Activated CD8-positive, alpha-beta T cell treated with anti-CD3 and anti-CD28 coated beads, Interleukin-2, amount 10 ng/mL, durations not matched to agents 7 days and 5 days (primary cell): ENCODE measurements at regions of chr22 and their contacts with region 1.

Region 1: GRCh38 chr22:31160328-31160978 is 471 bp downstream of the RNF185 start:
- DNase-seq: peak; percentile 23
- ATAC-seq: peak; percentile 57
- H3K4me3 Mint-ChIP-seq: peak overlapping the region; percentile 100
- H3K27ac Mint-ChIP-seq: peak overlapping the region; percentile 97
- H3K4me1 Mint-ChIP-seq: peaks cover 32% of the 10 kb centered on the region
- H3K27me3 Mint-ChIP-seq: peaks cover 5% of the 10 kb centered on the region

Region 2: GRCh38 chr22:31148953-31149627 is 11.4 kb before region 1 on chr22:
- CTCF ChIA-PET with region 1: interaction called, 10 read pairs
- POLR2A ChIA-PET with region 1: no interaction called
- DNase-seq: peak; percentile 45
- ATAC-seq: peak; percentile 68
- H3K4me3 Mint-ChIP-seq: no peak overlapping the region
- H3K27ac Mint-ChIP-seq: no peak overlapping the region
- H3K4me1 Mint-ChIP-seq: peaks cover 7% of the 10 kb centered on the region
- H3K27me3 Mint-ChIP-seq: peaks cover 2% of the 10 kb centered on the region

Region 3: DNA sequence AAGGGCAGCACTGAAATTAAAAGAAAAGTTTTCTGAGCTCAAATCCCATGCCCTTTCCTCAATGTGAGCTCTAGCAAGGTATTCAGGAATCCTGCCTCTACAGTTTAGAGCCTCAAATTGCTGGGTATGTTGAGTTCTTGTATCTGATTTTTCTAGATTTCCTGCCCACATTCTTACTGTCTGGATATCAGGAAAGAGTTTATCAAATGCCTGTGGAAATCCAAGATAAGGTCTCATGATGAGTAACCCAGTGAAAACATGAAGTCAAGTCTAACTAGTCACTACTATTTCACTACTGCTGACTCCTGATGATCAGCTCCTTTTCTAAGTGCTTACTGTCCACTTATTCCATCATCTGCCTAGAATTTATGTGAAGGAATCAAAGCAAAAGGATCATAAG is 81.5 kb after region 1 on chr22:
- CTCF ChIA-PET with region 1: no interaction called
- POLR2A ChIA-PET with region 1: no interaction called
- DNase-seq: no peak
- ATAC-seq: no peak
- H3K4me3 Mint-ChIP-seq: no peak overlapping the region
- H3K27ac Mint-ChIP-seq: no peak overlapping the region
- H3K4me1 Mint-ChIP-seq: peaks cover 27% of the 10 kb centered on the region
- H3K27me3 Mint-ChIP-seq: no peaks in the 10 kb centered on the region